GM12878 (cell line): ENCODE measurements at regions of chr15 and their contacts with region 1.

Region 1: GRCh38 chr15:64100958-64101357 is 5.2 kb downstream of the SNX1 start:
- DNase-seq: no peak
- ATAC-seq: peak; percentile 36; the same call in 2 of the 3 replicates
- H3K4me3 ChIP-seq: 0 out of 2 replicates have a peak overlapping the region, but pooled peaks have one; percentile 2
- H3K27ac ChIP-seq: no peak overlapping the region
- H3K4me1 ChIP-seq: peaks cover 13% of the 10 kb centered on the region
- H3K27me3 ChIP-seq: no peaks in the 10 kb centered on the region
- CTCF ChIP-seq: no peak
- EP300 ChIP-seq: no peak
- POLR2A ChIP-seq: no peak
- RAD21 ChIP-seq: no peak

Region 2: GRCh38 chr15:63945007-63945788 is 155.8 kb before region 1 on chr15:
- CTCF ChIA-PET with region 1: no interaction called
- POLR2A ChIA-PET with region 1: no interaction called
- RAD21 ChIA-PET with region 1: no interaction called
- SMC1A ChIA-PET with region 1: no interaction called
- in situ Hi-C with region 1: no loop called
- intact Hi-C with region 1: no loop called
- DNase-seq: no peak
- ATAC-seq: peak; percentile 89
- H3K4me3 ChIP-seq: no peak overlapping the region
- H3K27ac ChIP-seq: no peak overlapping the region
- H3K4me1 ChIP-seq: peaks cover 13% of the 10 kb centered on the region
- H3K27me3 ChIP-seq: no peaks in the 10 kb centered on the region
- CTCF ChIP-seq: peak; percentile 83 to 99 (median 98)
- EP300 ChIP-seq: no peak
- POLR2A ChIP-seq: no peak
- RAD21 ChIP-seq: peak; percentile 78

Region 3: GRCh38 chr15:64110950-64111678 is 10.2 kb after region 1 on chr15:
- CTCF ChIA-PET with region 1: interaction called, 9 read pairs
- POLR2A ChIA-PET with region 1: interaction called, 7 read pairs
- RAD21 ChIA-PET with region 1: interaction called, 3 read pairs
- SMC1A ChIA-PET with region 1: interaction called, 14 read pairs
- in situ Hi-C with region 1: no loop called
- intact Hi-C with region 1: no loop called
- DNase-seq: no peak
- ATAC-seq: peak; percentile 67
- H3K4me3 ChIP-seq: 0 out of 2 replicates have a peak overlapping the region, but pooled peaks have one; percentile 11
- H3K27ac ChIP-seq: peak overlapping the region; percentile 30
- H3K4me1 ChIP-seq: peaks cover 26% of the 10 kb centered on the region
- H3K27me3 ChIP-seq: no peaks in the 10 kb centered on the region
- CTCF ChIP-seq: no peak
- EP300 ChIP-seq: no peak
- POLR2A ChIP-seq: no peak
- RAD21 ChIP-seq: no peak

Region 4: GRCh38 chr15:64144565-64145281 is 43.8 kb after region 1 on chr15:
- CTCF ChIA-PET with region 1: interaction called, 5 read pairs
- POLR2A ChIA-PET with region 1: interaction called, 13 read pairs
- RAD21 ChIA-PET with region 1: interaction called, 6 read pairs
- SMC1A ChIA-PET with region 1: interaction called, 7 read pairs
- in situ Hi-C with region 1: no loop called
- intact Hi-C with region 1: no loop called
- DNase-seq: peak; percentile 79
- ATAC-seq: peak; percentile 91
- H3K4me3 ChIP-seq: peak overlapping the region; percentile 21; the same call in 1 of the 2 replicates
- H3K27ac ChIP-seq: peak overlapping the region; percentile 92
- H3K4me1 ChIP-seq: peaks cover 42% of the 10 kb centered on the region
- H3K27me3 ChIP-seq: no peaks in the 10 kb centered on the region
- CTCF ChIP-seq: no peak
- EP300 ChIP-seq: peak in 1 of 2 experiments; percentile 49; a peak in 2 of 4 replicates
- POLR2A ChIP-seq: peak; percentile 72
- RAD21 ChIP-seq: no peak